GM10248 (cell line): ENCODE measurements at regions of chr10 and their contacts with region 1.

Region 1: GRCh38 chr10:119859420-119860258 is 13.0 kb downstream of the MCMBP start:
- DNase-seq: peak; percentile 29
- CTCF ChIP-seq: peak; percentile 55

Region 2: GRCh38 chr10:119542988-119543813 is 316.4 kb before region 1 on chr10:
- CTCF ChIA-PET with region 1: no interaction called
- POLR2A ChIA-PET with region 1: no interaction called
- DNase-seq: peak; percentile 76
- CTCF ChIP-seq: peak; percentile 74

Region 3: DNA sequence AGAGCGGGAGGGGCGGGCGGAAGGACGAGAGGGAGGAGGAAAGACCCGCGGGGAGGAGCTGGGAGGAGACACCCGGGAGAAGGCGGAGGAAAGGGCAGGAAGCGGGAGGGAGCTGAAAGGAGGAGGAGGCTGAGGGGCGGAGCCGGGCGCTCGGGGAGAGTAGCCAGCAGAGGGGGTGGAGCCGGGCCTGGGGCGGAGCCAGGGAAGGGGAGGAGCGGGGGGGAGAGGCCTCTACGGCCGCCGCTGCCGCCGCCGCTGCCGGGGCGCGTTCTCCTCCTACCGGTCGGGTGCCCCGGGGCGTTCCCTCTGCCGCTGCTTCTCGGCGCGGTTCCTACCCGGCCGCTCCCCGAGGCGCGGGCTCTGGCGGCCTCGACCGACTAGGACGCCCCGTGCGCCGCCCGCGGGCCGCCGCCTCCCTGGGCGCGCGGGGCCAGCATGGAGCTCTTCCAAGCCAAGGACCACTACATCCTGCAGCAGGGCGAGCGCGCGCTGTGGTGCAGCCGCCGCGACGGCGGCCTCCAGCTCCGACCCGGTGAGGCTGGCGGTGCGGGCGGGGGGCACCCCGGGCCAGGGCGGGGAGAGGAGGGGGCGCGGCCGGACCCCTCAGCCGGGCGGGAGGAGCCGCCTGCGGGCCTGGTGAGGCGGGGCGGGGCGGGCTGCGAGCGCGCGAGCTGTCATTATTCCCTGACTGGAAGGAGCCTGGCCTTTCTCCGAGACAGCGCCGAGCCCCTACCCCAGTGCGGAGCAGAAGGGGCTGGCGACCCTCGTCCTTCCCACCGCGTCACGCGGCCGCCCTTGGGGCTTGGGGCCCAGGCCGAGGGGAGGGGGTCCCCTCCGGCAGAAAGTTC is 133.6 kb before region 1 on chr10 and contains the start of gene INPP5F:
- CTCF ChIA-PET with region 1: interaction called, 12 read pairs
- POLR2A ChIA-PET with region 1: interaction called, 4 read pairs
- DNase-seq: peak; percentile 100
- CTCF ChIP-seq: peak; percentile 27

Region 4: GRCh38 chr10:119750391-119751230 is 109.0 kb before region 1 on chr10:
- CTCF ChIA-PET with region 1: interaction called, 113 read pairs
- POLR2A ChIA-PET with region 1: no interaction called
- DNase-seq: peak; percentile 62
- CTCF ChIP-seq: peak; percentile 82

Region 5: GRCh38 chr10:119803264-119803663 is 56.4 kb before region 1 on chr10:
- CTCF ChIA-PET with region 1: interaction called, 12 read pairs
- POLR2A ChIA-PET with region 1: no interaction called
- DNase-seq: no peak
- CTCF ChIP-seq: no peak

Region 6: DNA sequence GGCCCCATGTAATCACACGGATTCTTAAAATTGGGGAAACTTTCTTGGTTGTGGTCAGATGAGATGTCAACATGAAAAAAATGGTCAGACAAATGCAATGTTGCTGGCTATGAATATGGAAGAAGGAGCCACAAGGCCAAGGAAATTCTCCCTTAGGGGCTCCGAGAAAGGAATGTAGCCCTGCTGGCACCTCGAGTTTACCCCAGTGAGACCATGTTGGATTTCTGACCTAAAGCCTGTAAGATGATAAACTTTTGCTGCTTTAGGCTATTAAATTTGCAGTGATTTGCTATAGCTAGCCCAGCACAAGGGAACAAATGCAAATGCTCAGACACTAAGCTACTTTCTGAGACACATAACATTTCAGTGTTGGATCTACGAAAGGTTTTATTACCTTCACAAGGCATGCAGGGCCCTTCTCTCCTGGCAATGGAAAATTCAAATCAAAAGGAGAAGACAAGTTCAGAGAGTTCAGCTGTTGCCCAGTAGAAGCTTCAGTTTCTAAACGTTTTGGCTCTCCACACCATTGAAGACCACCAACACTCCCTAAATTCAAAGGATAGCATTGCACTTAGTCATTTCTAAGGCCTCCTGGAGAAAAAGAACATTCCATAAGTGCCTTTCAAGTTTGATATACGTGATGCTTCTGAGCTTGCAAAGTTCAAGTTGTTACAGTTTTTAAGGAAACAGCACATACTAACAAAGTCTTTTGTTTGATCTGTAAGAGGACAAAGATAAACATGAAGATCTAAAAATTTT is 10.4 kb before region 1 on chr10:
- CTCF ChIA-PET with region 1: interaction called, 11 read pairs
- POLR2A ChIA-PET with region 1: no interaction called
- DNase-seq: no peak
- CTCF ChIP-seq: no peak

Region 7: GRCh38 chr10:119919826-119920225 is 60.2 kb after region 1 on chr10:
- CTCF ChIA-PET with region 1: no interaction called
- POLR2A ChIA-PET with region 1: no interaction called
- DNase-seq: peak; percentile 20
- CTCF ChIP-seq: no peak

Region 8: GRCh38 chr10:120005207-120006201 is 145.9 kb after region 1 on chr10:
- CTCF ChIA-PET with region 1: no interaction called
- POLR2A ChIA-PET with region 1: no interaction called
- DNase-seq: no peak
- CTCF ChIP-seq: no peak

Region 9: GRCh38 chr10:120131183-120131582 is 271.5 kb after region 1 on chr10:
- CTCF ChIA-PET with region 1: no interaction called
- POLR2A ChIA-PET with region 1: no interaction called
- DNase-seq: no peak
- CTCF ChIP-seq: no peak